ENCODE measurements at regions of chr11 and their contacts with region 1.

Region 1: DNA sequence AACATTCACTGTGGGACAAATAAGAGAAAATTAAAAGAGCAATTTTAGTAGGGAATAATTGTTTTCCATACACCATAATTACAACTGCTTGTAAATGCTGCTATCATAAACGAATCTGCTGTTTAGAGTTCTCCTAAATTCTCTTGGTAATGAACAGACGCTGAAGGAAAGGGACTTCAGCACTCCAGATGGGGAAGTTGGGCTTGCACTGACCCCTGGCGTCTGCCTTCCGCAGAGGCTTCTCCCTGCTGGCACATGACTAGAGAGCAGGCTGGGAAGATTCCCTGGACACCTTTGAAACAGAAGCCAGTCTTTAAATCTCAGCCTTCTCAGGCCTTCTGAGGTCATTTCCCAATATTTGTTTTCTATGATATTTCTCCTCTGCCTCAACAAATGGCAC is 84.1 kb downstream of the NXPE2 start:
- DNase-seq: peak; percentile 26
- ATAC-seq: peak; percentile 94
- H3K4me3 ChIP-seq: no peak overlapping the region
- H3K27ac ChIP-seq: no peak overlapping the region
- H3K4me1 ChIP-seq: no peaks in the 10 kb centered on the region
- H3K27me3 ChIP-seq: no peaks in the 10 kb centered on the region; a peak in 1 of 5 replicates
- CTCF ChIP-seq: peak; percentile 78
- EP300 ChIP-seq: no peak
- POLR2A ChIP-seq: no peak
- RAD21 ChIP-seq: peak; percentile 54

Region 2: GRCh38 chr11:114280696-114281095 is 481.7 kb before region 1 on chr11:
- CTCF ChIA-PET with region 1: interaction called, 11 read pairs
- POLR2A ChIA-PET with region 1: no interaction called
- in situ Hi-C with region 1: loop called (anchors 10 kb)
- intact Hi-C with region 1: loop called (anchors 1 kb)
- DNase-seq: peak; percentile 46
- ATAC-seq: peak; percentile 91
- H3K4me3 ChIP-seq: no peak overlapping the region
- H3K27ac ChIP-seq: no peak overlapping the region
- H3K4me1 ChIP-seq: no peaks in the 10 kb centered on the region
- H3K27me3 ChIP-seq: peaks cover 4 to 8% of the 10 kb centered on the region in 2 experiments; a peak in 3 of 5 replicates
- CTCF ChIP-seq: peak; percentile 88
- EP300 ChIP-seq: no peak
- POLR2A ChIP-seq: no peak
- RAD21 ChIP-seq: peak; percentile 51; the same call in 1 of the 2 replicates

Region 3: DNA sequence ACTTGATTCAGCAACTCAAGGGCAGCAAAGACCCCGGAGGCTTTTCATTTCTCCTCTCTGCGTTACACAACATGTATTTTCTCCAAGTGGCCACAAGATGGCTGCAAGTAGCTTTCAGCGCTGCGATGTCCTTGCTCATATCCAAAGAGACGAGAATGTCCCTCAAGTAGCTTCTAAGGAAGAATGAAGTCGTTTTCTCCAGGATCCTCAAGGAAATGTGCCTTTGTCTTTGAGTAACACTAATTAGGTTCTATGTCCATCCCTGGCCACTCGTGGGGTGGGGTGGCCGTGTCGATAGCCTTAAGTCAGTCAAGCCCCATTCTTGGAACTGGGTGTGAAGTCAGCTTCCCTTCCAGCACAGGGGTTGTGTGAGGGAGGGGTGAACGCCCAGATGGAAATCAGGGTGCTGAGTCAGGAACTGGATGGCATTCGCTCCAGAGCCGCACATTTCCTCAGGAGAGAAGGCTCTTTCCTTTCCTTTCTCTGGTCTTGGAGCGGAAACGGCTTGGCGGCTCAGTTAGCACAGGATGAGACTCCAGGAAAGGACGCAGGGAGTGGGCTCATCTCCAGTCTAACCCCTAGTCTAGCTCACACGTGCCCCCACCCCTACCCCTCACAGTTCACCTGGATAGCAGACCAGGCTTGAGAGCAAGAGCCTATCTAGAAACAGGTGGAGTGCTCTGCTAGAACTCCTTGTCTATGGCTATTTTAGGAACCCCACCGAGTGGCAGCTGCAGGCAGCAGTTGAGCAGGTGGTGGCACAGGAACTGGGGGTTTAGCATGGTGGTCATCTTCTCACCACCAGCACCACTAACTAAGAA is 421.9 kb before region 1 on chr11:
- CTCF ChIA-PET with region 1: interaction called, 13 read pairs
- POLR2A ChIA-PET with region 1: no interaction called
- in situ Hi-C with region 1: no loop called
- intact Hi-C with region 1: loop called (anchors 1 kb)
- DNase-seq: peak; percentile 30
- ATAC-seq: peak; percentile 71
- H3K4me3 ChIP-seq: no peak overlapping the region
- H3K27ac ChIP-seq: no peak overlapping the region
- H3K4me1 ChIP-seq: no peaks in the 10 kb centered on the region
- H3K27me3 ChIP-seq: 0 out of 5 replicates have a peak, but pooled peaks cover 0 to 5% of the 10 kb centered on the region in 2 experiments
- CTCF ChIP-seq: peak; percentile 81
- EP300 ChIP-seq: no peak
- POLR2A ChIP-seq: no peak
- RAD21 ChIP-seq: peak; percentile 49

Region 4: GRCh38 chr11:114738954-114739353 is 23.5 kb before region 1 on chr11:
- CTCF ChIA-PET with region 1: interaction called, 7 read pairs
- POLR2A ChIA-PET with region 1: no interaction called
- in situ Hi-C with region 1: no loop called
- intact Hi-C with region 1: loop called (anchors 2 kb)
- DNase-seq: peak; percentile 27
- ATAC-seq: peak; percentile 61; the same call in 2 of the 3 replicates
- H3K4me3 ChIP-seq: no peak overlapping the region
- H3K27ac ChIP-seq: no peak overlapping the region
- H3K4me1 ChIP-seq: no peaks in the 10 kb centered on the region
- H3K27me3 ChIP-seq: no peaks in the 10 kb centered on the region
- CTCF ChIP-seq: peak; percentile 65
- EP300 ChIP-seq: no peak
- POLR2A ChIP-seq: no peak
- RAD21 ChIP-seq: no peak

Region 5: GRCh38 chr11:114787126-114787525 is 24.7 kb after region 1 on chr11:
- CTCF ChIA-PET with region 1: no interaction called
- POLR2A ChIA-PET with region 1: no interaction called
- in situ Hi-C with region 1: no loop called
- intact Hi-C with region 1: no loop called
- DNase-seq: no peak
- ATAC-seq: no peak
- H3K4me3 ChIP-seq: no peak overlapping the region
- H3K27ac ChIP-seq: no peak overlapping the region
- H3K4me1 ChIP-seq: peaks cover 18% of the 10 kb centered on the region
- H3K27me3 ChIP-seq: peaks cover 6 to 7% of the 10 kb centered on the region in 2 experiments; a peak in 3 of 5 replicates
- CTCF ChIP-seq: no peak
- EP300 ChIP-seq: no peak
- POLR2A ChIP-seq: no peak
- RAD21 ChIP-seq: no peak

Region 6: GRCh38 chr11:114864896-114865295 is 102.5 kb after region 1 on chr11:
- CTCF ChIA-PET with region 1: no interaction called
- POLR2A ChIA-PET with region 1: no interaction called
- in situ Hi-C with region 1: no loop called
- intact Hi-C with region 1: no loop called
- DNase-seq: no peak
- ATAC-seq: no peak
- H3K4me3 ChIP-seq: no peak overlapping the region
- H3K27ac ChIP-seq: no peak overlapping the region
- H3K4me1 ChIP-seq: no peaks in the 10 kb centered on the region
- H3K27me3 ChIP-seq: 0 out of 5 replicates have a peak, but pooled peaks cover 0 to 3% of the 10 kb centered on the region in 2 experiments
- CTCF ChIP-seq: no peak
- EP300 ChIP-seq: no peak
- POLR2A ChIP-seq: no peak
- RAD21 ChIP-seq: no peak